Caco-2 (cell line): ENCODE measurements at regions of chr5 and their contacts with region 1.

Region 1: DNA sequence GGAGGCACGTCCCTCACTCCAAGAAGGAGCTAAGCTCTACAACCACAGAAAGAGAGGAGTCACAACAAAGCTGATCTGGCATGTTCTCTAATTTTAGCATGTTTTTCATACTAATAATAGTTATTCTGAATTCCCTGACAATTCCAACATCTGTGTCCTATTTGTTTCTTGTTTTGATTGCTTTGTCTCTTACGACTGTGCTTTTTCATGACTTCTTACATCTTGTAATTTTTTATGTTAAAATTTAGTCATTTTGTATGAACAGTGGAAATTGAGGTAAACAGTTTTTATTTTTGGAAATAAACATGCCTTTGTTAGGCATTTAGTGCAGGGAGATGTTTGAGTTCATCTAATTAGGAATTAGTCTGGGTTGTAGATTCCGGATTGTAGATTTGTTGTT is 668.1 kb upstream of the EDIL3 start:
- DNase-seq: no peak
- H3K4me3 ChIP-seq: no peak overlapping the region
- H3K4me3 Mint-ChIP-seq: no peak overlapping the region
- H3K27ac Mint-ChIP-seq: no peak overlapping the region
- H3K4me1 ChIP-seq: no peaks in the 10 kb centered on the region
- H3K4me1 Mint-ChIP-seq: no peaks in the 10 kb centered on the region
- H3K27me3 ChIP-seq: no peaks in the 10 kb centered on the region
- H3K27me3 Mint-ChIP-seq: peaks cover 9% of the 10 kb centered on the region
- CTCF ChIP-seq: no peak

Region 2: GRCh38 chr5:84524491-84524890 is 528.3 kb before region 1 on chr5:
- CTCF ChIA-PET with region 1: no interaction called
- POLR2A ChIA-PET with region 1: no interaction called
- intact Hi-C with region 1: loop called (anchors 5 kb)
- DNase-seq: no peak
- H3K4me3 ChIP-seq: no peak overlapping the region
- H3K4me3 Mint-ChIP-seq: no peak overlapping the region
- H3K27ac Mint-ChIP-seq: no peak overlapping the region
- H3K4me1 ChIP-seq: no peaks in the 10 kb centered on the region
- H3K4me1 Mint-ChIP-seq: no peaks in the 10 kb centered on the region
- H3K27me3 ChIP-seq: no peaks in the 10 kb centered on the region
- H3K27me3 Mint-ChIP-seq: peaks cover 2% of the 10 kb centered on the region
- CTCF ChIP-seq: no peak